Activated T-helper 2 cell treated with anti-CD3 and anti-CD28 coated beads, Interferon-gamma antibody, Interleukin-2, Interleukin-4, amounts not matched to agents 10 μg/mL and 5 μg/mL and 100 μg/mL, durations not matched to agents 14 hours and 24 hours and 36 hours (primary cell): ENCODE measurements at regions of chr1 and their contacts with region 1.

Region 1: DNA sequence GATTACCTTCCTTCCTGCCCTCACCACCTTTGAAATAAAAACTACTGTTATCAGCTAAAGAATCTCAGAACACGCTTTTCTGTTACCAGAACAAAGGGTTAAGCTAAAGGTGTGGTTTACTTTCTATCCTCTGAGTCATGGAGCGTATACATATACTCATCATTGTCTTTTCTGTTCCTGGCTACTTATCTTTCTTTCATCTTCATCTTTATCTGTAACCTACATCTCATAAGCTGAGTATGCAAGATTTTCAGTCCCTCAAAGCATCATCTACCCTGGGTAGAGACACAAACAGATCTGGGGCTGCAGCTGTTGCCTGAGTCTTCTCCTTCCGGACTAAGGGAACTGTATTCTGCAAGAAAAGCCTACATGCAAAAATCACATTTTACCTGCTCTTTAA is 75.6 kb downstream of the LMO4 start:
- DNase-seq: peak; percentile 18
- H3K4me3 Mint-ChIP-seq: no peak overlapping the region
- H3K27ac Mint-ChIP-seq: no peak overlapping the region
- H3K4me1 Mint-ChIP-seq: peaks cover 29% of the 10 kb centered on the region
- H3K27me3 Mint-ChIP-seq: peaks cover 39% of the 10 kb centered on the region

Region 2: GRCh38 chr1:87151500-87152421 is 252.5 kb before region 1 on chr1:
- intact Hi-C with region 1: loop called (anchors 1 kb)
- DNase-seq: peak; percentile 18
- H3K4me3 Mint-ChIP-seq: peak overlapping the region; percentile 81
- H3K27ac Mint-ChIP-seq: peak overlapping the region; percentile 85
- H3K4me1 Mint-ChIP-seq: peaks cover 15% of the 10 kb centered on the region
- H3K27me3 Mint-ChIP-seq: peaks cover 45% of the 10 kb centered on the region

Region 3: GRCh38 chr1:87328272-87329050 is 75.8 kb before region 1 on chr1 and contains the start of gene LMO4:
- intact Hi-C with region 1: loop called (anchors 1 kb)
- DNase-seq: peak; percentile 76
- H3K4me3 Mint-ChIP-seq: peak within 1 kb of the TSS; percentile 92
- H3K27ac Mint-ChIP-seq: peak within 1 kb of the TSS; percentile 89
- H3K4me1 Mint-ChIP-seq: peaks cover 32% of the 10 kb centered on the region
- H3K27me3 Mint-ChIP-seq: peaks cover 26% of the 10 kb centered on the region
- total RNA-seq, gene LMO4: 20.9 and 21.7 TPM in 2 replicates

Region 4: DNA sequence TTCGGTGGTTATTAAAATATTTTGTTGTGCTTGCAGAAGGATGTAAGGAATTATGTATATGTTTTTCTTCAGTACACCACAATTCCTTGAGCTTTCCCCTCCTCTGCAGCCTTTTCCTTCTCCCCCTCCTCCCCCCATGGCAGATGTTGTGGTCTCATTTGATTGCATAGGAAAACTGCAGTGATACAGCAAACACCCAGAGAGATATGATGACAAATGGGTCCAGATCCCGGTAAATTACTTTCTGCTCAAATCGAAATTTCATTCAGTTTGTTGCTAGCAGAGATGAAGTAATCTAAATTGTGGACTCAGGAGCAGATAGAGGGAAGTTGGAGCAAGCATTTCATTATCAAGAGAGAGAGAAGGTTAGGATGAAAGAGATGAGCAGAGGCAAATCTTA is 65.7 kb before region 1 on chr1:
- intact Hi-C with region 1: no loop called
- DNase-seq: no peak
- H3K4me3 Mint-ChIP-seq: no peak overlapping the region
- H3K27ac Mint-ChIP-seq: no peak overlapping the region
- H3K4me1 Mint-ChIP-seq: peaks cover 26% of the 10 kb centered on the region
- H3K27me3 Mint-ChIP-seq: peaks cover 17% of the 10 kb centered on the region

Region 5: DNA sequence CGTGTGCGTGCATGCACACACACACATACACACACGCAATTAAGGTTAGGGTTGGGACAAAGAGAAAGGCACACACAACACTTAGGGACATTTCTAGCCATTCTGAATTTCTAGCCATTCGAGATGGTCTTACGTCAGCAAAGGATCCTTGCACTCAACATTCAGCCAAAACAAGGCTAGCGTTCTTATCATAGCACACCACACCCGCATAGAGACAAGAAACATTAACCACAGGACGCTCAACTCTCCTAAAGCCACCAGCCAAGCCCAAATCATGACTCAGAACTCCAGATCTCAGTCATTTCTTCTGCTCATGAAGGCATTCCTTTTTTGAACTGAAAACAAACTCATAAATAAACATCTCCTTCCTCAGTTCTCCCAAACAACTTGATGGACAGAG is 31.2 kb after region 1 on chr1:
- intact Hi-C with region 1: loop called (anchors 2 kb)
- DNase-seq: no peak
- H3K4me3 Mint-ChIP-seq: no peak overlapping the region
- H3K27ac Mint-ChIP-seq: no peak overlapping the region
- H3K4me1 Mint-ChIP-seq: peaks cover 20% of the 10 kb centered on the region
- H3K27me3 Mint-ChIP-seq: peaks cover 29% of the 10 kb centered on the region

Region 6: DNA sequence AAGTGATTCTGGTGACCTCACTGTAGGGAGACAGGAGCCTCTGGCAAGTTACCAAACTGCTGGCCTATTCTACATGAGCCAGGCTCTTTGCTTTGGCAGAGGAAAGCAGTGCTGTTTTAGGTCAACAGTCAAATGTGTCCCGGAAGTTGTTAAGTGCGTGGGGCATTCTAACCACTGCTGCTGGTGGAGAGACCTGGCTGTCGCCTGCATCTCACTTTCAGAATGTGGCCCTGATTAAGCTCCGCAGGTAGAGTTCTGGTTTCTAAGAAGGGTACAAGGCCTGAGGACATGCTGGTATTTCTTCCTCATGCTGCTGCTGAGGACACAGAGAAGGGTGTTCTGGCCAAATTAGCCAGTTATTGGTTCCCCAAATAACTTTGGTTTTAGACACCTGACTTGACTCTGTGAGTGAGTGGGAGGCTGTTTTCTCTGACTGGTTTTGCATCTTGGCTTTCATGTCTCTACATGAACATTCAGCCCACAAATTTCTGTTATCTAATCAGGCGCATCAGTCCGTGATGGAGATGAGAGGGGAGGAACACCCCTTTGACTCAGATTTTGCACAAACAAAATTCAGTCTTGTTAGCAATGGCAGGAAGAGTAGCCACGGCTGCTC is 45.2 kb after region 1 on chr1:
- intact Hi-C with region 1: loop called (anchors 1 kb)
- DNase-seq: peak; percentile 11
- H3K4me3 Mint-ChIP-seq: no peak overlapping the region
- H3K27ac Mint-ChIP-seq: peak overlapping the region; percentile 74
- H3K4me1 Mint-ChIP-seq: peaks cover 19% of the 10 kb centered on the region
- H3K27me3 Mint-ChIP-seq: peaks cover 2% of the 10 kb centered on the region